Dendritic cell treated with granulocyte-macrophage colony-stimulating factor and Interleukin-4, amounts not matched to agents 40 ng/mL and 50 ng/mL, for 4 days (primary cell): ENCODE measurements at regions of chr1 and their contacts with region 1.

Region 1: DNA sequence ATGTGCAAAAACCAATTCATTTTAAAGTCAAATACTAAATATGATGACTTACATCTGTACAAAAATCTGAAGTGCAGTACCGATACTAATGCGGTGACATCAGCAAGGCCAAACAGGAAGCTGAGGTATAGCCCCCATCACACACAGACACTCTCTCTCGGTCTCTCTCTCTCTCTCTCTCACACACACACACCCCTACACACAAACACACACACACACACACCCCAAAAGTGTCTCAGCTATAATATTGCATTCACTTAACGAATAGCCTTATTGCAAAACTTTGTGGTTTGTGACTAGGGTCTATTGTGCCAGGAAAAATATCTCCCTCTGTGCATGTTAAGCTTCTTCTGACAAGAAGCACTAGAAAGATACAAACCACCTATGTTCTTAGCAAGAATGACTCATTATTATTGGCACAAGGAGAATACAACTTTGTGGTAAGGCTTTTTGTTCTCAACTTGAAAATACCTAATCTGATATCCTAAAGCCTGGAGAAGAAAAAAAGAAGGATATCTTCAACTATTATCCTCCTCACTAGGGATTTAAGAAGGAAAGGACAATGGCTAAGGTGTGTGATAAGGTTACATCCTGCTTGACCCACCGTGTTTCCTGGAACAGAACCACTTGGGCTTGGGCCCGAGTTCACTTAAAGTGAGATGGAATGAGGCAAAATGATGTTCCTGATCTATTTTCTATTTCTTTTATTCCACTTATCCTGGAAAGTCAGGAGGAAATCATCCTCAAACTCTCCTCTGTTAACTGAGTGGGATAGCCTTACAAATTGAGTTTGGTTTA is 107.1 kb downstream of the NIBAN1 start:
- H3K4me3 Mint-ChIP-seq: peak overlapping the region; percentile 58
- H3K27ac Mint-ChIP-seq: peak overlapping the region; percentile 82
- H3K4me1 Mint-ChIP-seq: peaks cover 40% of the 10 kb centered on the region
- H3K27me3 Mint-ChIP-seq: no peaks in the 10 kb centered on the region

Region 2: GRCh38 chr1:184878002-184878401 is 10.8 kb after region 1 on chr1:
- intact Hi-C with region 1: loop called (anchors 1 kb)
- H3K4me3 Mint-ChIP-seq: no peak overlapping the region
- H3K27ac Mint-ChIP-seq: no peak overlapping the region
- H3K4me1 Mint-ChIP-seq: peaks cover 54% of the 10 kb centered on the region
- H3K27me3 Mint-ChIP-seq: no peaks in the 10 kb centered on the region

Region 3: GRCh38 chr1:184905474-184905894 is 38.3 kb after region 1 on chr1:
- intact Hi-C with region 1: no loop called
- H3K4me3 Mint-ChIP-seq: no peak overlapping the region
- H3K27ac Mint-ChIP-seq: peak overlapping the region; percentile 80
- H3K4me1 Mint-ChIP-seq: peaks cover 33% of the 10 kb centered on the region
- H3K27me3 Mint-ChIP-seq: no peaks in the 10 kb centered on the region